Calu3 (cell line): ENCODE measurements at regions of chr1 and their contacts with region 1.

Region 1: GRCh38 chr1:94247138-94248094 is 10.0 kb upstream of the ARHGAP29 start:
- DNase-seq: peak; percentile 95
- H3K4me3 Mint-ChIP-seq: peak overlapping the region; percentile 88
- H3K27ac Mint-ChIP-seq: peak overlapping the region; percentile 78
- H3K4me1 Mint-ChIP-seq: peaks cover 44% of the 10 kb centered on the region
- H3K27me3 Mint-ChIP-seq: no peaks in the 10 kb centered on the region
- CTCF ChIP-seq: no peak

Region 2: DNA sequence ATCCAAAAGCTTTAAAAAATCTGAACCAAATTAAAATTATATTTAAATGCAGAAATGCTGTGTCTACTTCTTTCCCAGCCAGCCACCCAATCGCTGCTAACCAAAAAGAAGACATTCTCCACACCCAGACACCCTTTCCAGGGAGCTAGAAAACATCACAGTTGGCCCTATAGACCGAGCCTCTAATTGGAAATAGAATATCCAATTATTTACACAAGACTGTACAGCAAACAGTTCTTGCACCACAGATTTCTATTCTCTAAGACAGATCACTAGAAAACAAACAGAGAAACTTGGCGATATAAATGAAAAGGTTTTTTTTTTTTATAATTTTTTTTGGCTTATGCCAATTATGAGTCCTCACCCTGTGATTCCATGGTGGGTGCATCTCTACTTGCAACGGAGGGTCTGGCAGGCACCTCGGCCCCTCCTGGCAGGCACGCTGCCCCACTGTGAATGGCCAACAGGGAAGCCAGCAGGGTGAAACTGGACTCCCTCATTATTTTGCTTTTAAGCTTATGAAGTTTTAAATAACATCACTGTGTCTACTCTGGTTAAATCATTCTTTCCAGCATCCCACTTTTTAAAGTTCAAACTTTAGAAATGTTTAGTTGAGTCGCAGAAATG is 595.0 kb before region 1 on chr1:
- CTCF ChIA-PET with region 1: no interaction called
- intact Hi-C with region 1: no loop called
- DNase-seq: no peak
- H3K4me3 Mint-ChIP-seq: no peak overlapping the region
- H3K27ac Mint-ChIP-seq: no peak overlapping the region
- H3K4me1 Mint-ChIP-seq: no peaks in the 10 kb centered on the region
- H3K27me3 Mint-ChIP-seq: no peaks in the 10 kb centered on the region
- CTCF ChIP-seq: no peak

Region 3: GRCh38 chr1:94316836-94317789 is 69.7 kb after region 1 on chr1:
- CTCF ChIA-PET with region 1: interaction called, 4 read pairs
- intact Hi-C with region 1: loop called (anchors 2 kb)
- DNase-seq: peak; percentile 61
- H3K4me3 Mint-ChIP-seq: peak overlapping the region; percentile 20
- H3K27ac Mint-ChIP-seq: peak overlapping the region; percentile 60
- H3K4me1 Mint-ChIP-seq: peaks cover 45% of the 10 kb centered on the region
- H3K27me3 Mint-ChIP-seq: no peaks in the 10 kb centered on the region
- CTCF ChIP-seq: no peak